ENCODE measurements at regions of chr14 and their contacts with region 1.

Region 1: DNA sequence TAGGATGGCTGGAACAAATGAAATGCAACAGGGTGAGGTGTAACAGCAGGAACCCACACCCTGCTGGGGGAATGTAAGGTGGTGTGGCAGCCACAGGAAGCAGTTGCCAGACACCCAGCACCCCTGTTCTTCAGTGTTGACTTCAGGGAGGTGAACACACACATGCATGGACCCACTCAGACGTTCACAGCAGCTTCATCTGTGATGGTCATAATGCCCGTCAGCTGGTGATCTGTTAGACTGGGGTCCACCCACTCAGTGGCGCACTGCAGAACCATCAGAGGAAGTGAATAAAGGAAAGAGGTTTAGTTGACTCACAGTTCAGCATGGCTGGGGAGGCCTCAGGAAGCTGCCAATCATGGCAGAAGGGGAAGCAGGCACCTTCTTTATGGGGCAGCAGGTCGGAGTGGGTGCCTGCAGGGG is 22.7 kb upstream of the TEX22 start:
- DNase-seq: no peak
- ATAC-seq: no peak
- H3K4me3 Mint-ChIP-seq: no peak overlapping the region
- H3K27ac Mint-ChIP-seq: no peak overlapping the region
- H3K4me1 Mint-ChIP-seq: peaks cover 11% of the 10 kb centered on the region
- H3K27me3 Mint-ChIP-seq: peaks cover 15% of the 10 kb centered on the region
- CTCF ChIP-seq: no peak

Region 2: DNA sequence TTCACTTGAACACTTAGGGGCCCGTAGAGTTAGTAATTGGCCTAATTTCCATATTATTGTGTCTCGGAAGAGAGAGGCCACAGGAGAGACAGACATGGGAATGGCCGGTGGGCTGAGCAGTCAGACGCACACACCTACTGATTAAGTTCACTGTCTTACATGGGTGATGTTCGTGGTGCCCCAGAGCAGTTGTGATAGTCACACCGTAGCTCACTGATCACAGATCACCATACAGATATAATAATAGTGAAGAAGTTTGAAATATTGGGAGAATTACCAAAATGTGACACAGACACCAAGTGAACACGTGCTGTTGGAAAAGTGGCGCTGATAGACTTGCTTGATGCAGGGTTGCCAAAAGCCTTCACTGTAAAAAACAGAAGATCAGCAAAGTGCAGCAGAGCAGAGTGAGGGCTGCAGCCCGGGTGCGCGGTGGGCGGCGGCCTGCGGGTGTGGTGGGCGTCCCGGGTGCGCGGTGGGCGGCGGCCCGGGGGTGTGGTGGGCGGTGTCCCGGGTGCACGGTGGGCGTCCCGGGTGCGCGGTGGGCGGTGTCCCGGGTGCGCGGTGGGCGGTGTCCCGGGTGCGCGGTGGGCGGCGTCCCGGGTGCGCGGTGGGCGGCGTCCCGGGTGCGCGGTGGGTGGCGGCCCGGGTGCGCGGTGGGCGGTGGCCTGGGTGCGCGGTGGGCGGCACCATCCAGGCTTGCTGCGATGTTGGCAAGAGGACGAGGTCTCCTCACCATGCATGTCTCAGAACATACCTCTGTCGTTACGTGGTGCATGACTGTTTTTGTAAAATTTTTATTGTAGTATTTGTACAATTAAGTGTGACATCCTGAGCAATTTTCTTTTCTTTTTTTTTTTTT is 11.6 kb before region 1 on chr14:
- CTCF ChIA-PET with region 1: interaction called, 12 read pairs
- POLR2A ChIA-PET with region 1: no interaction called
- DNase-seq: no peak
- ATAC-seq: peak; percentile 62
- H3K4me3 Mint-ChIP-seq: peak overlapping the region; percentile 49
- H3K27ac Mint-ChIP-seq: 0 out of 2 replicates have a peak overlapping the region, but pooled peaks have one; percentile 10
- H3K4me1 Mint-ChIP-seq: 0 out of 2 replicates have a peak, but pooled peaks cover 5% of the 10 kb centered on the region
- H3K27me3 Mint-ChIP-seq: peaks cover 4% of the 10 kb centered on the region; the same call in 1 of the 2 replicates
- CTCF ChIP-seq: no peak

Region 3: GRCh38 chr14:105400016-105400415 is 24.4 kb after region 1 on chr14:
- CTCF ChIA-PET with region 1: no interaction called
- POLR2A ChIA-PET with region 1: no interaction called
- DNase-seq: no peak
- ATAC-seq: no peak
- H3K4me3 Mint-ChIP-seq: no peak overlapping the region
- H3K27ac Mint-ChIP-seq: no peak overlapping the region
- H3K4me1 Mint-ChIP-seq: no peaks in the 10 kb centered on the region
- H3K27me3 Mint-ChIP-seq: peaks cover 64% of the 10 kb centered on the region
- CTCF ChIP-seq: no peak

Region 4: GRCh38 chr14:105473677-105474482 is 98.2 kb after region 1 on chr14:
- CTCF ChIA-PET with region 1: interaction called, 11 read pairs
- POLR2A ChIA-PET with region 1: no interaction called
- DNase-seq: peak; percentile 99
- ATAC-seq: peak; percentile 64
- H3K4me3 Mint-ChIP-seq: peak overlapping the region; percentile 56
- H3K27ac Mint-ChIP-seq: no peak overlapping the region
- H3K4me1 Mint-ChIP-seq: 0 out of 2 replicates have a peak, but pooled peaks cover 3% of the 10 kb centered on the region
- H3K27me3 Mint-ChIP-seq: peaks cover 34% of the 10 kb centered on the region
- CTCF ChIP-seq: no peak

Region 5: GRCh38 chr14:105622322-105622955 is 246.8 kb after region 1 on chr14:
- CTCF ChIA-PET with region 1: no interaction called
- POLR2A ChIA-PET with region 1: no interaction called
- DNase-seq: no peak
- ATAC-seq: no peak
- H3K4me3 Mint-ChIP-seq: no peak overlapping the region
- H3K27ac Mint-ChIP-seq: no peak overlapping the region
- H3K4me1 Mint-ChIP-seq: no peaks in the 10 kb centered on the region
- H3K27me3 Mint-ChIP-seq: peaks cover 3% of the 10 kb centered on the region
- CTCF ChIP-seq: no peak